Activated CD4-positive, alpha-beta T cell treated with anti-CD3 and anti-CD28 coated beads for 36 hours (primary cell): ENCODE measurements at regions of chr5 and their contacts with region 1.

Region 1: GRCh38 chr5:54844905-54845566 is 140.4 kb downstream of the ESM1 start:
- DNase-seq: no peak
- ATAC-seq: no peak
- H3K4me3 Mint-ChIP-seq: no peak overlapping the region
- H3K27ac Mint-ChIP-seq: no peak overlapping the region
- H3K4me1 Mint-ChIP-seq: peaks cover 3% of the 10 kb centered on the region
- H3K27me3 Mint-ChIP-seq: peaks cover 5% of the 10 kb centered on the region

Region 2: DNA sequence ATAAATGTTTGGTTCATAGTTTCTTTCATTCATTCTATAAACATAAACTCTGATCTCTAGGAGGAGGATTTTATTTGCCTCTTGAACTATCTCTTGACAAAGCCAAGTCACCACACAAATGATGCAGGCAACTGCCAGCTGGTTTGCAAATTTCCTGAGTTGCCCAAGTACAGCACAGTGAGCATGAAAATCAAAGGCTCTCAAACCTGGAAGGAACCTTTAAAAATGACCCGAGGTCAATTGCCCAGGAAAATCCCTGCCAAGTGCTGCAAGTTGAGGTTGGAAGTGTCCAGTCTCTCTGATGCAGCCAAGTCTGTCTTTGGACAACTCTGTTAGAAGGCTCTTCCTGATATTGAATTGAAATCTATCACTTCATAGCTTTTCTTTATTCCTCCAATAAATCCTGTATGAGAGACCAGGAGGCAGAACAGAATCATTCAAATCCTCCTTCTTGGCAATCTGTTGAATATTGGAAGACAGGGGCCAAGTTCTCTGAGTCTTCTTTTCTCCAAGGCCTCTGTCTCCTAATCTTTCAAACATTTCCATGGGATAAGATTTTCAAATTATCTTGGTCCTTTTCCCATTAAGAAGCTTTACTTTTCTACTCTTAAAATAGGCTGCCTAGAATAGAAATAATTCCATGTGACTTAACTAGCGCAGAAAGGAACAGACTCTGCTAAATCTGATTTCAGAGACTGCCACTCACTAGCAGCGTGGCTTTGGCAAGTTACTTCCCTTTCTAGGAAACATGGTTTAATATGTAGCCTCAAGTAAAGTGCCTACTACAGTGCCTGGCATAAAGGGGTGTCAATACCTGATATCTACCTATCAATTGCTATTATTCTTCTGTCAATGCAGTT is 168.3 kb before region 1 on chr5:
- CTCF ChIA-PET with region 1: no interaction called
- POLR2A ChIA-PET with region 1: no interaction called
- intact Hi-C with region 1: no loop called
- DNase-seq: no peak
- ATAC-seq: no peak
- H3K4me3 Mint-ChIP-seq: no peak overlapping the region
- H3K27ac Mint-ChIP-seq: no peak overlapping the region
- H3K4me1 Mint-ChIP-seq: peaks cover 20% of the 10 kb centered on the region
- H3K27me3 Mint-ChIP-seq: no peaks in the 10 kb centered on the region

Region 3: GRCh38 chr5:54832858-54833257 is 12.2 kb before region 1 on chr5:
- CTCF ChIA-PET with region 1: interaction called, 18 read pairs
- POLR2A ChIA-PET with region 1: no interaction called
- intact Hi-C with region 1: no loop called
- DNase-seq: no peak
- ATAC-seq: no peak
- H3K4me3 Mint-ChIP-seq: no peak overlapping the region
- H3K27ac Mint-ChIP-seq: no peak overlapping the region
- H3K4me1 Mint-ChIP-seq: peaks cover 7% of the 10 kb centered on the region
- H3K27me3 Mint-ChIP-seq: no peaks in the 10 kb centered on the region

Region 4: GRCh38 chr5:54861212-54861894 is 16.3 kb after region 1 on chr5:
- CTCF ChIA-PET with region 1: interaction called, 37 read pairs
- POLR2A ChIA-PET with region 1: no interaction called
- intact Hi-C with region 1: loop called in 1 of 2 experiments (anchors 2 kb)
- DNase-seq: no peak
- ATAC-seq: no peak
- H3K4me3 Mint-ChIP-seq: no peak overlapping the region
- H3K27ac Mint-ChIP-seq: no peak overlapping the region
- H3K4me1 Mint-ChIP-seq: no peaks in the 10 kb centered on the region
- H3K27me3 Mint-ChIP-seq: peaks cover 35% of the 10 kb centered on the region

Region 5: GRCh38 chr5:54867310-54867944 is 22.4 kb after region 1 on chr5:
- CTCF ChIA-PET with region 1: interaction called, 37 read pairs
- POLR2A ChIA-PET with region 1: no interaction called
- intact Hi-C with region 1: loop called (anchors 1 to 2 kb)
- DNase-seq: no peak
- ATAC-seq: no peak
- H3K4me3 Mint-ChIP-seq: no peak overlapping the region
- H3K27ac Mint-ChIP-seq: no peak overlapping the region
- H3K4me1 Mint-ChIP-seq: peaks cover 29% of the 10 kb centered on the region
- H3K27me3 Mint-ChIP-seq: peaks cover 34% of the 10 kb centered on the region

Region 6: GRCh38 chr5:54930736-54931135 is 85.7 kb after region 1 on chr5:
- CTCF ChIA-PET with region 1: no interaction called
- POLR2A ChIA-PET with region 1: no interaction called
- intact Hi-C with region 1: no loop called
- DNase-seq: peak; percentile 27
- ATAC-seq: peak; percentile 19
- H3K4me3 Mint-ChIP-seq: no peak overlapping the region
- H3K27ac Mint-ChIP-seq: no peak overlapping the region
- H3K4me1 Mint-ChIP-seq: peaks cover 3% of the 10 kb centered on the region
- H3K27me3 Mint-ChIP-seq: peaks cover 17% of the 10 kb centered on the region